Body of pancreas (tissue), 4 donors: ENCODE measurements at regions of chr16 and their contacts with region 1.

Region 1: DNA sequence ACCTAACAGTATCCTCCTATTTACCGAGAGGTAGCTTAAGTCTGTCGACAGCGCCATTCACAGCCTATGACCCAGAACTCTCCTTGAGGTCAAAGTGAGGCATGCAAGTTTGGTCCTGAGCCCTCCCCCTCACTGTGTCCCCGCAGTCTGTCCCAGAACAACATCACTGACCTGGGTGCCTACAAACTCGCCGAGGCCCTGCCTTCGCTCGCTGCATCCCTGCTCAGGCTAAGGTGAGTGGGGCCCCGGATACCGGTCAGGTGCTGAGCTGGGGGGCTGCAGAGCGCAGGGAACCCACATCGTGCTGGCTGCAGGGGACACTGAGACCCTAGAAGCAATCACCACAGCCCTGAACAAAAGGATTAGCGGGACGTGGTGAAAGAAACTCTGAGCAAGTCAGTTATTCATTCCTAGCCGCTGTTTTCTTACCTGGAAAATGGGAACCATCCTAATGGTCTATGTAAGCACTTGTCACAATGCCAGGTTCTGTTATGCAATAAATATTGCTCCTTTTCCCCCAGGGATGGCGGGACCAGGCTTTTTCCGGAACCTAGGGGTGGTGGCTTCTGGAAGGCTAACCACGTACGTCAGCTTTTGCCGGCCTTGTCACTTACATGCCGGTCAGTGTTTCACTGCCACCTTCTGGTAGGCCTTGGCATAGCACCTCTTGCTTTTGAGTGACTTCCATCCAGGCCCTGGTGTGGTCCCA is 23.8 kb downstream of the DEXI start:
- DNase-seq: peak; percentile 96 to 97 (median 97)
- ATAC-seq: peak; percentile 94
- H3K4me3 ChIP-seq: no peak overlapping the region
- H3K27ac ChIP-seq: peak overlapping the region in 2 of 4 donors; percentile 48 to 51
- H3K4me1 ChIP-seq: peaks cover 23% of the 10 kb centered on the region
- H3K27me3 ChIP-seq: no peaks in the 10 kb centered on the region
- CTCF ChIP-seq: peak; percentile 82 to 97 (median 96)
- POLR2A ChIP-seq: peak in 1 of 3 donors; percentile 23

Region 2: GRCh38 chr16:10745841-10746240 is 172.6 kb before region 1 on chr16:
- intact Hi-C with region 1: loop called (anchors 5 kb)
- DNase-seq: no peak
- ATAC-seq: no peak
- H3K4me3 ChIP-seq: no peak overlapping the region
- H3K27ac ChIP-seq: peak overlapping the region; percentile 18 to 99 (median 63)
- H3K4me1 ChIP-seq: peaks cover 42% of the 10 kb centered on the region
- H3K27me3 ChIP-seq: no peaks in the 10 kb centered on the region
- CTCF ChIP-seq: no peak
- POLR2A ChIP-seq: no peak

Region 3: GRCh38 chr16:10835281-10835931 is 83.0 kb before region 1 on chr16:
- intact Hi-C with region 1: loop called (anchors 10 kb)
- DNase-seq: no peak
- ATAC-seq: no peak
- H3K4me3 ChIP-seq: no peak overlapping the region
- H3K27ac ChIP-seq: no peak overlapping the region
- H3K4me1 ChIP-seq: peaks cover 18% of the 10 kb centered on the region
- H3K27me3 ChIP-seq: no peaks in the 10 kb centered on the region
- CTCF ChIP-seq: no peak
- POLR2A ChIP-seq: no peak